CD14-positive monocyte (primary cell): ENCODE measurements at regions of chr6 and their contacts with region 1.

Region 1: GRCh38 chr6:143569040-143569439 is 57.5 kb upstream of the FUCA2 start:
- DNase-seq: peak in 1 of 3 donors; percentile 58
- H3K4me3 ChIP-seq: no peak overlapping the region
- H3K4me3 Mint-ChIP-seq: no peak overlapping the region
- H3K27ac ChIP-seq: no peak overlapping the region
- H3K27ac Mint-ChIP-seq: no peak overlapping the region
- H3K4me1 ChIP-seq: peaks cover 13 to 16% of the 10 kb centered on the region in 2 donors
- H3K4me1 Mint-ChIP-seq: peaks cover 14% of the 10 kb centered on the region
- H3K27me3 ChIP-seq: no peaks in the 10 kb centered on the region
- H3K27me3 Mint-ChIP-seq: peaks cover 0 to 2% (median 0%) of the 10 kb centered on the region in 3 donors
- CTCF ChIP-seq: no peak

Region 2: GRCh38 chr6:143958839-143959399 is 389.9 kb after region 1 on chr6:
- intact Hi-C with region 1: loop called in 1 of 2 experiments (anchors 10 kb)
- DNase-seq: no peak
- H3K4me3 ChIP-seq: no peak overlapping the region
- H3K4me3 Mint-ChIP-seq: no peak overlapping the region
- H3K27ac ChIP-seq: no peak overlapping the region
- H3K27ac Mint-ChIP-seq: no peak overlapping the region
- H3K4me1 ChIP-seq: no peaks in the 10 kb centered on the region
- H3K4me1 Mint-ChIP-seq: no peaks in the 10 kb centered on the region
- H3K27me3 ChIP-seq: no peaks in the 10 kb centered on the region
- H3K27me3 Mint-ChIP-seq: peaks cover 0 to 2% (median 0%) of the 10 kb centered on the region in 3 donors
- CTCF ChIP-seq: no peak

Region 3: DNA sequence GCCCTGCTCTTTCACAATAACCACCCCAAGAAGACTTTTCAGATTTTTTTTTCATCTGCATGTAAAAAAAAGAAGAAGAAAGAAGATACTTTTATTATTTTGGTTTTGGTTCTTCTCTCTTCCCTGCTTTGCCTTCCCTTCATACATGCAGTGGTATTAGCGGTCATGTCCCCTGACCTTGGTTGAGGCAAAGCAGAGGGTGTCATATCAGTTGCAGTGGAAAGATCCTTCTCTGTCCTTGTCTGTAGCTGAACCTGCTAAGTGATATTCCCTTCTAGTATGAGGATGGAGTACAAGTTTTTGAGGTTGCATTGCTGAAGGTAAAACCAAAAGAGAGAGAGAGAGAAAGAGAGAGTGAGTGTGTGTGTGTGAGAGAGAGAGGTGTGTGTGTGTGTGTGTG is 1061.8 kb after region 1 on chr6:
- intact Hi-C with region 1: no loop called
- DNase-seq: no peak
- H3K4me3 ChIP-seq: peak overlapping the region in 1 of 3 experiments; percentile 4
- H3K4me3 Mint-ChIP-seq: peak overlapping the region in 1 of 2 donors; percentile 39
- H3K27ac ChIP-seq: peak overlapping the region in 1 of 2 donors; percentile 62
- H3K27ac Mint-ChIP-seq: peak overlapping the region; percentile 24 to 72 (median 56)
- H3K4me1 ChIP-seq: peaks cover 41 to 45% of the 10 kb centered on the region in 2 donors
- H3K4me1 Mint-ChIP-seq: peaks cover 35% of the 10 kb centered on the region
- H3K27me3 ChIP-seq: no peaks in the 10 kb centered on the region
- H3K27me3 Mint-ChIP-seq: peaks cover 0 to 2% (median 0%) of the 10 kb centered on the region in 3 donors
- CTCF ChIP-seq: no peak